Activated CD4-positive, alpha-beta T cell treated with anti-CD3 and anti-CD28 coated beads, Interleukin-2, amount 10 ng/mL, durations not matched to agents 24 days and 14 days (primary cell): ENCODE measurements at regions of chr3 and their contacts with region 1.

Region 1: DNA sequence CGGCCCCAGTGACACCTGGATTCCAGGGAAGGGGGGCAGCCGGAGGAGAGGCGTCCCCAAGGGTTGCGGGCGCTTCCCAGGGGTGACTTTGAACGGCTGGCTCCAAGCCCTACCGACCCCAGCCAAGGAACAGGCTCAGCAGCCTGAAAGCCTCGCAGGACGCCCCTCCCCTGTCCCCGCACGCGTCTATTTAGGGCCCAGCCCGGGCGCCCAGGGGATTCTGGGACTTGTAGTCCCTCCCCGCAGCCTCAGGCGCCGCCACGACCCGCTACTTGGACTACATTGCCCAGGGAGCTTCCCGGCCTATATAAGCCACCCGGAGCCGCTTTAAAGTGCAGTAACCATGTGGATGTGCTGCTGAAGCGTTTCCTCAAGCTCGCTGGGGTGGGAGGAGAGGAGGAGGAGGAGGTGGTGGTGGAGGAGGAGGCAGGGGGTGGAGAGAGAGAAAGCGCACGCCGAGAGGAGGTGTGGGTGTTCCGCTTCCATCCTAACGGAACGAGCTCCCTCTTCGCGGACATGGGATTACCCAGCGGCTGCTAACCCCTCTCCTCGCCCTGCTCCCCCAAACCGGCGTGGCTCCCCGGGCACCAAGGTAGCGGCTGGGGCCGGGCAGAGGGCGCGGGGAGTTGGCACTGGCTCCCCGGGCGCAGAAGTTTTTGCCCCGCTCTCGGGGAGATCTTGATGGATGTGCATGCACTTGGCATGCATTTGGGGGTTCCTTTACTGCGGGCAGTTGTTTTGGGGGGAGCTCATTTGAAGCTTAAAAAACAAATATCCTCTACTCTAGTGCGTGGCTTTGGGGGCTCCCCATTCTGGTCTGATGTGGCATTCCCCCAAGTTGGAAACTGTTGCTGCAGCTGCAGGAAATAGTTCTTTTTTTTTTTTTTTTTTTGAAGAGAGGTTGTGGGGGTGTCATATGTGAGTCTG is at the start of gene ITPR1:
- DNase-seq: peak; percentile 99
- H3K4me3 Mint-ChIP-seq: peak within 1 kb of the TSS; percentile 92
- H3K27ac Mint-ChIP-seq: peak within 1 kb of the TSS; percentile 91
- H3K4me1 Mint-ChIP-seq: peaks cover 39% of the 10 kb centered on the region
- H3K27me3 Mint-ChIP-seq: peaks cover 33% of the 10 kb centered on the region
- total RNA-seq, gene ITPR1: 84.5 and 85.2 TPM in 2 replicates

Region 2: DNA sequence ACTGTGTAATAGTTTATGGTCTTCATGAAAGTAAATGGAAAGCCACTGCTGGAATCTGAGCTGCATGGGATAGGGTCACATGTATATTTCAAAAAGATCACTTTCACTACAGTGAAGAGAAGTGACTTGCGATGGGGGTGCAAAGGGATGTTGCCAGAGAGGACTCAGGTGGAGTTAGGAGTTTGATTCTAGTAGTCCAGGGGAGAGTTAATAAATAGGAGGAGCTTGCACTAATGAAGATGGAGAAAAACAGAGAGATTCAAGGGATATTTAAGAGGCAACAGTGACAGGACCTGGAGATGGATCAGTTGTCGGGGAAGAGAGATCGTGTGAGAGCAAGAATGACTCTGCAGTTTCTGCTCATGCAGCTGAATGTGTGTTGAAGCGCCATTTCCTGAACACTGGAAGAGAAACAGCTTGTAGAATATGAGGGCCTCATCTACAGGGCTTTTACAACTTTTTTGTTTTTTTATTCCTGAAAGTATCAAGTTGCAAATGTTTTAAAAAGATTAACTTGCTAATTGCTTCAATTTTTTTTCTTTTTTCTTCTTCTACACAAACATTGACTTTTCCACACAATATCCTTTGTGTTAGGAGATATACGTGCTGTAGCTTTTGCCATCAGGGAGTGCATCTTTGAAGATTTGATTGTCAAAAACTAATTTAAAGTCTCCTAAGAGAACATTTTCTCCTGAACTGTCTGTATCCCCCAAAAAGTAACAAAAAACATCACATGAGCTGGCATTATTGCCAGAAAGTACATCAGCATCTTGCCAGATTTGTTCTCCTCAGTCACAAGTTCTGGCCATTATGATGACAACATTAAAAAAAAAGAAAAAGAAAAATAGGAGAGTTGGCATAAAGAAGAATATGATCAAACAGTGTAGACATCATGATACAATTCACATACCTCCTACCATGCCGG is 152.6 kb before region 1 on chr3:
- intact Hi-C with region 1: no loop called
- DNase-seq: no peak
- H3K4me3 Mint-ChIP-seq: no peak overlapping the region
- H3K27ac Mint-ChIP-seq: no peak overlapping the region
- H3K4me1 Mint-ChIP-seq: peaks cover 5% of the 10 kb centered on the region
- H3K27me3 Mint-ChIP-seq: peaks cover 13% of the 10 kb centered on the region

Region 3: GRCh38 chr3:4350789-4351163 is 142.5 kb before region 1 on chr3:
- intact Hi-C with region 1: loop called (anchors 1 kb)
- DNase-seq: peak; percentile 87
- H3K4me3 Mint-ChIP-seq: peak overlapping the region; percentile 56
- H3K27ac Mint-ChIP-seq: peak overlapping the region; percentile 56
- H3K4me1 Mint-ChIP-seq: peaks cover 21% of the 10 kb centered on the region
- H3K27me3 Mint-ChIP-seq: peaks cover 1% of the 10 kb centered on the region

Region 4: GRCh38 chr3:4426601-4427344 is 66.5 kb before region 1 on chr3:
- intact Hi-C with region 1: loop called (anchors 1 kb)
- DNase-seq: no peak
- H3K4me3 Mint-ChIP-seq: no peak overlapping the region
- H3K27ac Mint-ChIP-seq: no peak overlapping the region
- H3K4me1 Mint-ChIP-seq: peaks cover 18% of the 10 kb centered on the region
- H3K27me3 Mint-ChIP-seq: no peaks in the 10 kb centered on the region

Region 5: GRCh38 chr3:4517643-4518311 is 24.5 kb after region 1 on chr3:
- intact Hi-C with region 1: loop called (anchors 2 kb)
- DNase-seq: no peak
- H3K4me3 Mint-ChIP-seq: no peak overlapping the region
- H3K27ac Mint-ChIP-seq: peak overlapping the region; percentile 64
- H3K4me1 Mint-ChIP-seq: peaks cover 30% of the 10 kb centered on the region
- H3K27me3 Mint-ChIP-seq: no peaks in the 10 kb centered on the region

Region 6: DNA sequence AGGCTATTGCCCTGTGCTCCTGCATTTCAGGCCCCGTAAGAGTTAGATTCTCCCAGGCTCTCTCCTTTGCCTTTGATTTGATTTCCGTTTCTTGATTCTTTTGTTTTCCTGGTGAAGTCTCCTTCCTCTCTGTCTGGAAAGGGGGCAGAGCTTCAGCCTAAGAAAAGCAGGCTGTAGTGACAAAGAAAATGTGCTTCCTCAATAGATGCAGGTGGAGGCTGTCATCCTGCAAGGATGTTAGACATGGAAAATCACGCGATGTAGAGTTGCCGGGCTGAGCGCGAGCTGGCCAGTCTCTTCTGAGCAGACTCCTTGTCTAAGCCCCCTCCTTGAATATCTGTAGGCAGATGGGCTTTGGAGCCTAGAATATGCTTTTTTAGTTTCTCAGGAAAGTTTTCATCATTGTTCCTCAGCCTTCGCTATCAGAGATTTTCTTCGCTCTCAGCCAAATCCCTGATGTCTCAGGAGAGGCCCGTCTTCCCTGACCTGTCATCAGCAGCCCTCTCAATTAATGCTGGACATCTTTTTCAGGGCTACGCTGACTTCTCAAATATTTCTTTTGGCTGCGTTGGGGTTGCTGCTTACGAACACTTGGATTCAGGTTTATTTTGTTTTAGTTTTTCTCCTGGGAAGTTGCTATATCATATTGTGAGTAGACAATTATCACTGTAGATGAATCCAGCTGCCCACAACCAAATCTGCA is 163.5 kb after region 1 on chr3:
- intact Hi-C with region 1: no loop called
- DNase-seq: no peak
- H3K4me3 Mint-ChIP-seq: no peak overlapping the region
- H3K27ac Mint-ChIP-seq: no peak overlapping the region
- H3K4me1 Mint-ChIP-seq: peaks cover 2% of the 10 kb centered on the region
- H3K27me3 Mint-ChIP-seq: no peaks in the 10 kb centered on the region

Region 7: GRCh38 chr3:4906107-4906621 is 412.9 kb after region 1 on chr3:
- intact Hi-C with region 1: loop called (anchors 5 kb)
- DNase-seq: peak; percentile 71
- H3K4me3 Mint-ChIP-seq: peak overlapping the region; percentile 60
- H3K27ac Mint-ChIP-seq: peak overlapping the region; percentile 88
- H3K4me1 Mint-ChIP-seq: peaks cover 77% of the 10 kb centered on the region
- H3K27me3 Mint-ChIP-seq: no peaks in the 10 kb centered on the region

Region 8: DNA sequence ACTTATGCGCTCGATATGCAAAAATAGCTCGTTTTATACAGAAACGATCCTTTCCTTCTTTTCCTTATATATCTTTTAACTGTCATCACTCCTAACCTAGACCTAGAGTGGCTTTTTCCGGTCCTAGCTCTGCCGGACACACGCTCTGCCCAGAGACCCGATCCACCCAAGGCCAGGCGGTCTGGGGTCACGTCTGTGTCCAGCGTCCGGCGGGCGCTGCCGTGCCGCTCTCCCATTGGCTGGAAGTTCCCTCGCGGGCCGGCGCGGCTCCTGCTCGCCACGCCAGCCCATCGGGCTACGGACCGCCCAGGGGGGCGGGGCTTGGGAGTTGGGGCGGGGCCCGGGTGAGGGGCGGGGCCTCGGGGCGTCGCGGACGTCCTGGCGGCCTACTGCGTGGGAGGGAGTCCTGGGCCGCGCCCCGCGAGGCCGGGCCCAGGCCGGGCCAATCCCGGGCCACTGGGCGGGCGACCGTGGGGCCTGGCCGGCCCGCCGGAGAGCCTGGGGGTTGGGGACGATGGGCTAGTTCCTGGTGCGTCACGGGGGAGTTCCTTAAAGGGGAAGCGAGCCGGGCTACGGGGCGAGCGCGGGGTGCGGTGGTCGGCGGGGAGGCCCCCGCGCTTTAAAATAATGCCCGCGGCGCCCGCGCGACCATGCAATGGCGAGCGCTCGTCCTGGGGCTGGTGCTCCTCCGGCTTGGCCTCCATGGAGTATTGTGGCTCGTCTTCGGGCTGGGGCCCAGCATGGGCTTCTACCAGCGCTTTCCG is 694.1 kb after region 1 on chr3 and contains the start of gene EDEM1:
- intact Hi-C with region 1: loop called (anchors 2 kb)
- DNase-seq: peak; percentile 99
- H3K4me3 Mint-ChIP-seq: peak within 1 kb of the TSS; percentile 99
- H3K27ac Mint-ChIP-seq: peak within 1 kb of the TSS; percentile 97
- H3K4me1 Mint-ChIP-seq: peaks cover 29% of the 10 kb centered on the region
- H3K27me3 Mint-ChIP-seq: no peaks in the 10 kb centered on the region
- total RNA-seq, gene EDEM1: 167 and 168 TPM in 2 replicates